Right ventricle myocardium inferior (tissue), 1 donor: ENCODE measurements at regions of chr11 and their contacts with region 1.

Region 1: DNA sequence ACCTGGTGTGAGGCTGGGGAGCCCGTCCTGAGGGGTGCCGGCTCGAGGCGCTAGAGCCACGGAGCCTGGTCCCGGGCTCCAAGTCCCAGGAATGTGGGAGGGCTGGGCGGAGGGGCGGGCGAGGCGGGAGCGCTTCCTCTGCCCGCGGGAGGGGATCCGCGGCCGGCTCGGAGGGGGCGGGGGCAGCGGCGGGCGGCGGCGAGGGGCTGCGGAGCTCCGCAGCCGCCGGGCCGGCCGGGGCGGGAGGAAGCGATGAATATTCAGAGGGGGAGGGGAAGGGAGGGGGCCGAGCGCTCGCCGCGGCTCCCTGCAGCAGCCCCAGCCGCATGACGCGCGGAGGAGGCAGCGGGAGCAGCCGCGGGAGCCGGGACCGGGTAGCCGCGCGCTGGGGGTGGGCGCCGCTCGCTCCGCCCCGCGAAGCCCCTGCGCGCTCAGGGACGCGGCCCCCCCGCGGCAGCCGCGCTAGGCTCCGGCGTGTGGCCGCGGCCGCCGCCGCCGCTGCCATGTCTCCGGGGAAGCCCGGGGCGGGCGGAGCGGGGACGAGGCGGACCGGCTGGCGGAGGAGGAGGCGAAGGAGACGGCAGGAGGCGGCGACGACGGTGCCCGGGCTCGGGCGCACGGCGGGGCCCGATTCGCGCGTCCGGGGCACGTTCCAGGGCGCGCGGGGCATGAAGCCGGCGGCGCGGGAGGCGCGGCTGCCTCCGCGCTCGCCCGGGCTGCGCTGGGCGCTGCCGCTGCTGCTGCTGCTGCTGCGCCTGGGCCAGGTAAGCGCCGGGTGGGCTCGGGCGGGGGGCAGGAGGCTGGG is at the start of gene PTPRJ:
- DNase-seq: peak; percentile 85
- ATAC-seq: peak; percentile 58
- total RNA-seq, gene PTPRJ: 7.2 TPM

Region 2: DNA sequence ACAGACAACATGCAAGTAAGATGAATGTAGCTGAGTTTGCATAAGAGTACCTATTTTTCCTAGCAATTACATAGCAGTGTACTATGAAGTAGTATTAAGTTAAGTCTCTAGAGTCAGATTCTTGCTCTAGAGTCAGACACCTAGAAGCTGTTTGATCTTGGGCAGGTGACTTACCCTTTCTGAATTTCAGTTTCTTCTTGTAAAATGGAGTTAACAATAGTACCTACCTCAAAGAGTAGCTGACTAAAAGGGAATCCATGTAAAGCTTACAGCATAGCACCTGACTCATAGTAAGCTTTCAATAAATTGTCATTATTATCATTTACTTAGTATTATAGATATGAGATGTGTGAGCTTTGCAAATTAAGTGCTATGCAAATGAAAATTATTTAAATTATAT is 47.9 kb before region 1 on chr11:
- intact Hi-C with region 1: loop called (anchors 5 kb)
- DNase-seq: no peak
- ATAC-seq: no peak

Region 3: GRCh38 chr11:48001438-48002021 is 21.1 kb after region 1 on chr11:
- intact Hi-C with region 1: no loop called
- DNase-seq: no peak
- ATAC-seq: peak; percentile 46

Region 4: DNA sequence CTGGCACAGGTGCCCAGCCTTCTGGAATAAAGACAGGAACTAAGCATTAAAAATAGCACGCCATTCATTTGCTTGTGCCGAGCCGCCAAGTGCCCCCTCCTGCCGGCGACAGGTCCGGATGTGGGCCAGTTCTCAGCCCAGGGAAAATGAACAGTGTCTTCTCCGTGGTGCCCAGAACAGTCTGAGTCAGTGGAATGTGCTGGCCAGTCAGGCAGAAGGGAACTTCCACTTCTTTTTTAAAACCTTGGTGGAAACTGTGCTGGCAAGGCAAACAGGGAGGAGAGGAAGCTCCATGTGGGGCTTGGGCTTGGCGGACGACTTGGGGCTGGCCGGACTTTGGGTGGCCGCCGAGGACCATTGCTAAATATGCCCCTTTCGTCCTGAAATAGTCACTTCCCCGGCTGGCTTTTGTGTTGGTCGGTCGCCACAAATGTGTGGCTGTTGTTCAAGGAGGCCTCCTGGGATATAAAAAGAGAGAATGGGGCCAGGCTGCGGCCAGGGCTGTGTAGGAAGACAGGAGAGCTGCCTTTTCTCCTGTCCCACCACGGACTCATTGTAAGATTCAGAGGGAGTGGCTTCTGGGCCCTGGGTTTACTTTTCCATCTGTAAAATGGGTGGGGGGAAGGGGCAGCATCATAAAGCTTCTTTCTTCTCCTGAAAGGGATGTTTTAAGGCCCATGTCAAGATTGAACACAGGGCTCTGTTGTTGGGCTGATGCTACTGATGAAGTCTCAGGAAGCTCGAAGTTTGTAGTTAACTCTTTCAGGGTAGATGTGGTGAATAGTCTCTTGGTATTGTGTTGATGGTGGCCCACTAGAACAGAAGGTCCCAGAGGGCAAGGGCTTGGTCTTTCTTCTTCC is 100.9 kb after region 1 on chr11:
- intact Hi-C with region 1: loop called (anchors 5 kb)
- DNase-seq: peak; percentile 81
- ATAC-seq: peak; percentile 97

Region 5: GRCh38 chr11:48210052-48210451 is 229.6 kb after region 1 on chr11:
- intact Hi-C with region 1: no loop called
- DNase-seq: no peak
- ATAC-seq: no peak